Naive thymus-derived CD4-positive, alpha-beta T cell (primary cell): ENCODE measurements at regions of chr4 and their contacts with region 1.

Region 1: DNA sequence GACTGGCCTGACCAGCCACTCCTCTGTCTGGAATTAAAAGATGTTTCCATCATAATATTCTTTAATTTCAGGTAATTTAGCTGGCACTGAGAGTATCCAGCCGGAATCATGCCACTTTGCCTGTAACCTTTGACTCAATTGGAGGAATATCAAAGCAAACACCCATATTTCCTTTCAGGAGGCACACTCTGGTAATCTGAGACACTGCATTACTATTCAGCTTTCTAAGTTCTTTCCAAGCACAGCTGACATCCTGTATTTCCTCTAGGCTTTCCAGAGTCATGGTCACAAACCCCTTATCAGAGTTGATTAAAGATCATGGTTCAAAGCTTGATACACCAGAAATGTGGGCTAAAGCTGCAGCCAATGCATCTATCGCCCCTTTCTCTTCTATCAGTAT is 29.3 kb downstream of the INTS12 start:
- DNase-seq: no peak
- ATAC-seq: no peak
- H3K4me3 ChIP-seq: no peak overlapping the region
- H3K4me3 Mint-ChIP-seq: no peak overlapping the region
- H3K27ac ChIP-seq: no peak overlapping the region
- H3K27ac Mint-ChIP-seq: no peak overlapping the region
- H3K4me1 ChIP-seq: no peaks in the 10 kb centered on the region
- H3K4me1 Mint-ChIP-seq: no peaks in the 10 kb centered on the region
- H3K27me3 ChIP-seq: no peaks in the 10 kb centered on the region
- H3K27me3 Mint-ChIP-seq: no peaks in the 10 kb centered on the region

Region 2: GRCh38 chr4:105698607-105699006 is 19.4 kb after region 1 on chr4:
- CTCF ChIA-PET with region 1: no interaction called
- POLR2A ChIA-PET with region 1: no interaction called
- intact Hi-C with region 1: loop called in 1 of 2 experiments (anchors 2 kb)
- DNase-seq: no peak
- ATAC-seq: no peak
- H3K4me3 ChIP-seq: no peak overlapping the region
- H3K4me3 Mint-ChIP-seq: no peak overlapping the region
- H3K27ac ChIP-seq: no peak overlapping the region
- H3K27ac Mint-ChIP-seq: no peak overlapping the region
- H3K4me1 ChIP-seq: peaks cover 0 to 3% of the 10 kb centered on the region in 2 donors
- H3K4me1 Mint-ChIP-seq: peaks cover 8 to 23% (median 17%) of the 10 kb centered on the region in 7 donors
- H3K27me3 ChIP-seq: no peaks in the 10 kb centered on the region
- H3K27me3 Mint-ChIP-seq: no peaks in the 10 kb centered on the region